GM12878 (cell line): ENCODE measurements at regions of chr3 and their contacts with region 1.

Region 1: GRCh38 chr3:12663936-12664908 is at the start of gene RAF1:
- DNase-seq: peak; percentile 90
- ATAC-seq: peak; percentile 89
- H3K4me3 ChIP-seq: peak within 1 kb of the TSS; percentile 86
- H3K27ac ChIP-seq: peak within 1 kb of the TSS; percentile 97
- H3K4me1 ChIP-seq: peaks cover 4% of the 10 kb centered on the region
- H3K27me3 ChIP-seq: no peaks in the 10 kb centered on the region
- CTCF ChIP-seq: no peak
- EP300 ChIP-seq: peak in 1 of 2 experiments; percentile 30; a peak in 1 of 4 replicates
- POLR2A ChIP-seq: peak; percentile 91
- RAD21 ChIP-seq: no peak
- polyA plus RNA-seq, gene RAF1: 20.4 to 27.9 TPM

Region 2: DNA sequence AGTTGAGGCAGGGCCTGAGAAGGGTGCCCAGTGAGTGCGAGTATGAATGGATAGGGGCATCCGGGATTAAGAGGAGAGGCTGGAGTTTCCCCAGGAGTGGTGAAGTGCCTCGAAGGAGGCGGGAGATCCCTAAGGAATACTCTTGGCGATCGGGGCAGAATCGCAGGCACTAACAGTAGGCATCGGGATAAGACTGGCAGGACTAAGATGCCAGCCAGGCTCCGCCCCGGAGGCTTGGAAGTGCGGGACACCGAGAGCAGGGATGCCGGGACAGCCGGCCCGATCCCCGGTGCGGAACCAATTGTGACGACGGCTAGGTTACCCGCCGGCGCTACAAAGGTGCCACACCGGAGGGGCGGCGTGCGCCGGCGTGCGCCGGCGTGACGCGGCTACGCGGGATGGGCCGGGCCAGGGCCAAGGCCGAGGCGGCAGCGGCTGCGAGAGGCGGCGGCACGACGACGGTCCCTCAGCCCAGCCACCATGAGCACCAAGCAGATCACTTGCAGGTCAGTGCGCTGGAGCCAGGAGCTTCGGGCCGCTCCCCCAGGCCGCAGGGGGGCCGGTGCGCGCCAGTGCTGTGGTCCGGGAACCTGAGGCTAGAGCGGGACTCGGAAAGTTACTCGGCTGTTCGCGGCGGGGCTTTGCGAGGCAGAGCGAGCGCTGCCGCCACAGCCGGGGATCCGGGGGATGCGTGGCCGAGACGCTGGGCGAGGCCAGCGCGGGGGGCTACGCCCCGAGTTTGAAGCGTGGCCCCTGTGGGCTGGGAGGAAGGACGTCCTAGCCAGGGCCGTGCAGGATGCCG is 107.3 kb before region 1 on chr3 and contains the start of gene MKRN2:
- CTCF ChIA-PET with region 1: interaction called, 3 read pairs
- POLR2A ChIA-PET with region 1: interaction called, 38 read pairs
- RAD21 ChIA-PET with region 1: interaction called, 18 read pairs
- SMC1A ChIA-PET with region 1: interaction called, 38 read pairs
- in situ Hi-C with region 1: no loop called
- intact Hi-C with region 1: loop called (anchors 2 kb)
- DNase-seq: peak; percentile 33
- ATAC-seq: peak; percentile 89
- H3K4me3 ChIP-seq: peak within 1 kb of the TSS; percentile 95
- H3K27ac ChIP-seq: peak within 1 kb of the TSS; percentile 89
- H3K4me1 ChIP-seq: peaks cover 22% of the 10 kb centered on the region
- H3K27me3 ChIP-seq: no peaks in the 10 kb centered on the region
- CTCF ChIP-seq: no peak
- EP300 ChIP-seq: no peak
- POLR2A ChIP-seq: peak; percentile 99
- RAD21 ChIP-seq: no peak
- polyA plus RNA-seq, gene MKRN2: 15.4 to 21.8 TPM

Region 3: DNA sequence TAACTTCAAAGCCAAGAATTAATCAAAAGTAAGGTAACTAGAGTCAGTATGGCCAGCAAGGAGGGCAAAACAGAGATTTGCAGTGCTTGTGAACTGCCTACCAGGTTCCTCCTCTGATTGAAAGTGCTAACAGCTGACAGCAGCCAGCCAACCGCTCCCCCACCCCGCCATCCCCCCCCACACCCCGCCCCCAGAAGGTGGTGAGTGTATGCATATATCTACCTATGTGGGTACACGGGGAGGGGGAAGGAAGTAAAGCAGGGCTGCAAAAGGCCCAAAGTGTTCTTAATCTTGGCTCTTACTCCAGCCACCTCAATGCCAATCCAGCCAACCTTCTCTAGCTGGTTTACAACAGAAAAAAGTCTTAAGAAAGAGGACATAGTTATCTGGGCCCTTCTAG is 51.0 kb before region 1 on chr3:
- CTCF ChIA-PET with region 1: no interaction called
- POLR2A ChIA-PET with region 1: interaction called, 4 read pairs
- RAD21 ChIA-PET with region 1: interaction called, 8 read pairs
- SMC1A ChIA-PET with region 1: interaction called, 11 read pairs
- in situ Hi-C with region 1: no loop called
- intact Hi-C with region 1: loop called (anchors 5 kb)
- DNase-seq: no peak
- ATAC-seq: no peak
- H3K4me3 ChIP-seq: no peak overlapping the region
- H3K27ac ChIP-seq: no peak overlapping the region
- H3K4me1 ChIP-seq: no peaks in the 10 kb centered on the region
- H3K27me3 ChIP-seq: no peaks in the 10 kb centered on the region
- CTCF ChIP-seq: no peak
- EP300 ChIP-seq: no peak
- POLR2A ChIP-seq: no peak
- RAD21 ChIP-seq: no peak

Region 4: DNA sequence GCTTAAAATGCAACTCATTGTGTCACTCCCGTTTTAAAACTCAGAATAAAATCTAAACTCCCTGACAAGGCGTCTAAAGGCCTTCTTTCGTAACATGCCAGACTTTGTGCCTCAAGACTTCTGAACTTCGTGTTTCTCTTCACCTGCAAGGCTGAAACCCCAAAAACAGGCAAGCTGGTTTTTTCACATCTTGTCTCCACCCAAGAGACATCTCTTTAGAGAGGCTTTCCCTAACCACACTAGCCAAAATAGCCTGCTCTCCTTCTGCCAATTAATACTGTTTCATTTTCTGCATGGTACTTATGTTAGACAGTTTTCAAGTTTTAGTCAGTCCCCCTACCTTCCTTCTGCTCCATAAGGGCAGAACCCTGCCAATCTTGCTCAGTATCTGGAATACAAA is 41.9 kb before region 1 on chr3:
- CTCF ChIA-PET with region 1: no interaction called
- POLR2A ChIA-PET with region 1: interaction called, 4 read pairs
- RAD21 ChIA-PET with region 1: interaction called, 3 read pairs
- SMC1A ChIA-PET with region 1: interaction called, 35 read pairs
- in situ Hi-C with region 1: no loop called
- intact Hi-C with region 1: loop called (anchors 5 kb)
- DNase-seq: peak; percentile 37
- ATAC-seq: peak; percentile 27; the same call in 2 of the 3 replicates
- H3K4me3 ChIP-seq: no peak overlapping the region
- H3K27ac ChIP-seq: peak overlapping the region; percentile 40; the same call in 1 of the 2 replicates
- H3K4me1 ChIP-seq: peaks cover 20% of the 10 kb centered on the region
- H3K27me3 ChIP-seq: no peaks in the 10 kb centered on the region
- CTCF ChIP-seq: no peak
- EP300 ChIP-seq: no peak
- POLR2A ChIP-seq: no peak
- RAD21 ChIP-seq: no peak

Region 5: DNA sequence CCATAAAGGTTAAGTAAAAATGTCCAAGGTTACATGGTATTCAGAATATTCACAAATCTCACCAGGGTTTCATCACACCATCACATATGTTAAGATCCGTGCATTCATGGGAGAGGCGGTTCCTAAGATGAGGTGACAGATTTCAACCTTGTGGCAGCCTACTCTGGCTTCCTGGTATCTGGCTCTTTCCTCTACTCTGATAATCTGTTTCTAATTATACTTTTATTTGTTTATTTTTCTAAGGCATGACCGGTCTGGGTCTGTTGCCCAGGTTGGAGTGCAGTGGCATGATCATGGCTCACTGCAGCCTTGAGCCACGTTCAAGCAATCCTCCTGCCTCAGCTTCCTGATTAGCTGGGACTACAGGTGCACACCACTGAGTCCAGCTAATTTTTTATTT is 34.7 kb before region 1 on chr3:
- CTCF ChIA-PET with region 1: interaction called, 3 read pairs
- POLR2A ChIA-PET with region 1: interaction called, 4 read pairs
- RAD21 ChIA-PET with region 1: no interaction called
- SMC1A ChIA-PET with region 1: interaction called, 9 read pairs
- in situ Hi-C with region 1: no loop called
- intact Hi-C with region 1: loop called (anchors 5 kb)
- DNase-seq: no peak
- ATAC-seq: no peak
- H3K4me3 ChIP-seq: no peak overlapping the region
- H3K27ac ChIP-seq: no peak overlapping the region
- H3K4me1 ChIP-seq: peaks cover 14% of the 10 kb centered on the region
- H3K27me3 ChIP-seq: no peaks in the 10 kb centered on the region
- CTCF ChIP-seq: no peak
- EP300 ChIP-seq: no peak
- POLR2A ChIP-seq: no peak
- RAD21 ChIP-seq: no peak

Region 6: DNA sequence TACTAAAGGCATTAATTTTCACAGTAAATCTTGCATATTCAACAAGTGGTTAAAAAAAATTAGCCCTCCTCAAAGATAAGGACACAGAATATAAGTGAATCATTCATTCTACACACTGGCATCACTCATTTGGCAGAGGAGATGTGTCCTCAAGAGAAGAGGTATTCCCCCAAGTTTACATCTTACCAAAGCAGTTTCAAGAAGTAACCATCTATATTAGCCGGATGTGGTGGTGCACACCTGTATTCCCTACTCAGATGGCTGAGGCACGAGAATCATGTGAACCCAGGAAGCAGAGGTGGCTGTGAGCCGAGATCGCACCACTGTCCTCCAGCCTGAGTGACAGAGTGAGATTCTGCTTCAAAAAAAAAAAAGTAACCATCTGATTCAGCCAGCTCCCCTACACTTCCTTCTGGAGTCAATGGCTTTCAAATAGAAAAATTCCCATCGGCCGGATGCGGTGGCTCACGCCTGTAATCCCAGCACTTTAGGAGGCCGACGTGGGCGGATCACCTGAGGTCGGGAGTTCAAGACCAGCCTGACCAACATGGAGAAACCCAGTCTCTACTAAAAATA is 15.8 kb before region 1 on chr3:
- CTCF ChIA-PET with region 1: interaction called, 30 read pairs
- POLR2A ChIA-PET with region 1: interaction called, 125 read pairs
- RAD21 ChIA-PET with region 1: interaction called, 72 read pairs
- SMC1A ChIA-PET with region 1: interaction called, 140 read pairs
- in situ Hi-C with region 1: no loop called
- intact Hi-C with region 1: no loop called
- DNase-seq: peak; percentile 85
- ATAC-seq: peak; percentile 82
- H3K4me3 ChIP-seq: peak overlapping the region; percentile 59
- H3K27ac ChIP-seq: peak overlapping the region; percentile 88
- H3K4me1 ChIP-seq: peaks cover 26% of the 10 kb centered on the region
- H3K27me3 ChIP-seq: no peaks in the 10 kb centered on the region
- CTCF ChIP-seq: no peak
- EP300 ChIP-seq: peak in 1 of 2 experiments; percentile 57; a peak in 1 of 4 replicates
- POLR2A ChIP-seq: no peak
- RAD21 ChIP-seq: no peak

Region 7: GRCh38 chr3:12750223-12750622 is 86.0 kb after region 1 on chr3:
- CTCF ChIA-PET with region 1: no interaction called
- POLR2A ChIA-PET with region 1: no interaction called
- RAD21 ChIA-PET with region 1: no interaction called
- SMC1A ChIA-PET with region 1: no interaction called
- in situ Hi-C with region 1: no loop called
- intact Hi-C with region 1: no loop called
- DNase-seq: no peak
- ATAC-seq: peak; percentile 24
- H3K4me3 ChIP-seq: no peak overlapping the region
- H3K27ac ChIP-seq: 0 out of 2 replicates have a peak overlapping the region, but pooled peaks have one; percentile 3
- H3K4me1 ChIP-seq: peaks cover 22% of the 10 kb centered on the region
- H3K27me3 ChIP-seq: no peaks in the 10 kb centered on the region
- CTCF ChIP-seq: no peak
- EP300 ChIP-seq: no peak
- POLR2A ChIP-seq: no peak
- RAD21 ChIP-seq: no peak